Activated T-helper 2 cell treated with anti-CD3 and anti-CD28 coated beads, Interferon-gamma antibody, Interleukin-2, Interleukin-4, amounts not matched to agents 10 μg/mL and 5 μg/mL and 100 μg/mL, durations not matched to agents 14 hours and 24 hours and 36 hours (primary cell): ENCODE measurements at regions of chr4 and their contacts with region 1.

Region 1: GRCh38 chr4:176902710-176903323 is 110.1 kb upstream of the VEGFC start:
- DNase-seq: no peak
- H3K4me3 Mint-ChIP-seq: no peak overlapping the region
- H3K27ac Mint-ChIP-seq: peak overlapping the region; percentile 55
- H3K4me1 Mint-ChIP-seq: peaks cover 15% of the 10 kb centered on the region
- H3K27me3 Mint-ChIP-seq: peaks cover 7% of the 10 kb centered on the region

Region 2: DNA sequence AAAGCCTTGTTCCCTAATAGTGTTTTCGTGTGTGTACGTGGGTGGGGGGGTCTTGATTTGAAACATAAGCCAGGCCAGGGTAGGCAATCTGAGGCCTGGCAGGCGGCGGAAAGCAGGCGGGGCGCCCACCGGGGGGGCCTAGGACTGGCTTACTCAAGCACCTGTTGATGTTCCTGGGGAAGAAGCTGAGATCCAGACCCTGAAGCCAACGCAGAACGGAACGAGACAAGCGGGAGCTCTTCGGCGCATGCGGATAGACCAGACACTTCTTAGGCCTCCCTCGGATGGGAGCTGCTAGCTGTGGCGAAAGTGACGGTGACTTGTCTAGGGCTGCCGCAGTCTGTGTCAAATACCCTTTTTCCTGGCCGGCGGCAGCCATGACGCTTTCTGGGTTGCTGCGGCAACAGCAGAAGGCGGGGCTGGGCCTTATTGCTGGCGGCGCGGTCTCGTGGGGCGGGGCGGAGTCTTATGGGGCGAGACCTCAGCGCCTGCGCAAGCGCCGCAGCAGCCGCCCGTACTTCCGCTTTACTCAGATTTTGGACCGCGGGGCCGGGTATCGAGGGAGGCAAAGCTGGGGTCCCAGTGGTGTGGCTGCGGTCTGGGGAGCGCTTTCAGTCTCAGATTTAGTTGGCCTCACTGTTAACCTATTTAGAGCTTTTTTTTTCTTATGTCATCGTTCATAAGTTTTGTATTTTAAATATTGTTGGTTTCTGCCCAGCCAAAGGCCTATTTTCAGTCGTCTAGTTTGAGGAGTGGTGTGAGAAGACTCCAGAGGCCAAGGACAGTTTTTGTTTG is 707.4 kb before region 1 on chr4 and contains the start of gene SPATA4:
- intact Hi-C with region 1: loop called (anchors 2 kb)
- DNase-seq: peak; percentile 90
- H3K4me3 Mint-ChIP-seq: peak within 1 kb of the TSS; percentile 71
- H3K27ac Mint-ChIP-seq: no peak within 1 kb of the TSS
- H3K4me1 Mint-ChIP-seq: peaks cover 25% of the 10 kb centered on the region
- H3K27me3 Mint-ChIP-seq: peaks cover 42% of the 10 kb centered on the region
- total RNA-seq, gene SPATA4: not detected in 2 replicates

Region 3: DNA sequence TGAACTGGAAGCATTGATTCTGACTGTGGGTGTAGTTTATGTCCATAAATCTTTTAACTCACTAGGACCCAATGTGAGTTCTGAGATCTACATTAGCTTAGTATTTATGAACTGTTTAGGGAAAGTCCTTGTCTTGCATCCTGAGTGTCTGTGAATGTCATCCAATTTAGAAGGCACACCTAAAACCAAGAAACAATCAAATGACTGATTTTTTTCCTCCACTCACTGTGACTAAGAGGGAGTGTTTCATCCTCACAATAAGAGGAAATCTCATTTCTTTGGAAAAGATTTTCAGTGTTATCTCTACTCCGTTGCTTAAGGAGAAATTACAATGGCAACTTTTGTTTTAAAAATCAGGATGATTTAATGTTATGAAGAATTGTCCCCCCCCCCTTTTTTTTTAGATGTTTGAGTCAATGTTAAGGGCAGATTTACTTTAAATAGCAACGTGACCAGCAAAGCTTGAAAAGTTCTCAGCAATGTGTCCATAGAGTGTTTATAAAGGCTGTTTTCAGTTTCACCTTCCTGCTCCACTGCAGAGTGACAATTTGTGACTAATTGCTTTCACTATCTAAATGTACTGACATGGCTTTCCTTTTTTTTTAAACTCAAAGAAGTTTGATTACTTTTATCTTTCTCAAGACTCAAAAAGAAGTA is 410.0 kb before region 1 on chr4:
- intact Hi-C with region 1: loop called (anchors 2 kb)
- DNase-seq: no peak
- H3K4me3 Mint-ChIP-seq: peak overlapping the region; percentile 22
- H3K27ac Mint-ChIP-seq: peak overlapping the region; percentile 71
- H3K4me1 Mint-ChIP-seq: peaks cover 9% of the 10 kb centered on the region
- H3K27me3 Mint-ChIP-seq: no peaks in the 10 kb centered on the region

Region 4: GRCh38 chr4:176789955-176790354 is 112.9 kb before region 1 on chr4:
- intact Hi-C with region 1: loop called (anchors 5 kb)
- DNase-seq: no peak
- H3K4me3 Mint-ChIP-seq: no peak overlapping the region
- H3K27ac Mint-ChIP-seq: no peak overlapping the region
- H3K4me1 Mint-ChIP-seq: peaks cover 11% of the 10 kb centered on the region
- H3K27me3 Mint-ChIP-seq: peaks cover 42% of the 10 kb centered on the region

Region 5: DNA sequence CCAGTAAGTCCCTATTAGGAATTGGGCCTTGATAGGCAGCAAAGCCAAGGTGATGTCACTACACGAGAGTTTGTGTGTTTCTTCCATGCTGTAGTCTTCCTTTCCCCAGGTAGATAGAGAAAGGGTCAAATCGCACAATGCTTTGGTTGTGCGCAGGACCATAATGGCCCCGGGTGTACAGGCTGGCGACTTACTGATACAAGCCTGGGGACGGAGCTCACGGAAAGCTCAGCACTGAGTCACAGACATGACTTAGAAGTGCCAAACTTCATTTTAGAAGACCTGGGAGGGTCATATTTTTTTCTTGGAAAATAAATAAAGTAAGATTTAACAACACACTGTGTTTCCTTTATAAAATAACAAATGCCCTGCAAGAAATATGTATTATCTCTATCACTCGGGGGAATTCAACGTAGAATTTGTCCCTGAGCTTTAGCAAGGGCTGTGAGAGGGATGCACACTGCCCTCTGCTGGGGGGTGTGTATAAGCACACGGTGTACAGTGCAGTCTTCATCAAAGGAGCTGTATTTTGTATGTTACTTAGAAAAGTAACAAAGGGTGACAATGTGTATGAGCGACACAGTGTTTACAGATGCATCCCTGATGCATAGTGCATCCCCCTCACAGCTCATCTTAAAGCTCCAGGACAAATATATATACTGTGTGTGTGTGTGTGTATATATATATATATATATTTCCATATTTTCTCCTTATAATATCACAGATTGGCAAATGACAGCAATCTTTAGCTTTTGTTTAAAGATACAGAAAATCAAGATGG is 144.4 kb after region 1 on chr4:
- intact Hi-C with region 1: loop called (anchors 10 kb)
- DNase-seq: peak; percentile 34
- H3K4me3 Mint-ChIP-seq: no peak overlapping the region
- H3K27ac Mint-ChIP-seq: no peak overlapping the region
- H3K4me1 Mint-ChIP-seq: peaks cover 3% of the 10 kb centered on the region
- H3K27me3 Mint-ChIP-seq: peaks cover 7% of the 10 kb centered on the region

Region 6: GRCh38 chr4:177441803-177442622 is 539.2 kb after region 1 on chr4 and contains the start of gene AGA:
- intact Hi-C with region 1: loop called (anchors 2 kb)
- DNase-seq: peak; percentile 95
- H3K4me3 Mint-ChIP-seq: peak within 1 kb of the TSS; percentile 94
- H3K27ac Mint-ChIP-seq: peak within 1 kb of the TSS; percentile 97
- H3K4me1 Mint-ChIP-seq: peaks cover 31% of the 10 kb centered on the region
- H3K27me3 Mint-ChIP-seq: no peaks in the 10 kb centered on the region
- total RNA-seq, gene AGA: 19.5 and 21.0 TPM in 2 replicates

Region 7: DNA sequence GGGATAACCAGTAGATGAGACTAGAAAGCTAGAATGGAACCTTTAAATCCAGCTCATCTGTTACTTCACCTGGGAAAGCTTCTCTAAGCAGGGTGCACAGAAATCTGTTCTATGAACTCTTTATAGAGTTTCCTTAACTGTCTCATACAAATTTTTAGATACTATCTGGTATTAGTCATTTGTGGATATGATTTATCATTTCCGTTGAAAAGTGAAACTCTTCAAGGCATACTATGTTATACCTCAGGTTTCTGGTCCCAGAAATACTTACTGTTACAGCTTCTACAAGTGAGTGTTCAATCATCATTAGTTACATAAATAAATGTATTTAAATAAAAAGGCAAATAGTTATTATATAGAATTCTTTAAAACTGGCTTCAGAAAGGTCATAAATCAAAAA is 837.7 kb after region 1 on chr4:
- intact Hi-C with region 1: loop called (anchors 5 kb)
- DNase-seq: no peak
- H3K4me3 Mint-ChIP-seq: no peak overlapping the region
- H3K27ac Mint-ChIP-seq: no peak overlapping the region
- H3K4me1 Mint-ChIP-seq: peaks cover 6% of the 10 kb centered on the region
- H3K27me3 Mint-ChIP-seq: peaks cover 8% of the 10 kb centered on the region